ENCODE measurements at regions of chr6 and their contacts with region 1.

Region 1: DNA sequence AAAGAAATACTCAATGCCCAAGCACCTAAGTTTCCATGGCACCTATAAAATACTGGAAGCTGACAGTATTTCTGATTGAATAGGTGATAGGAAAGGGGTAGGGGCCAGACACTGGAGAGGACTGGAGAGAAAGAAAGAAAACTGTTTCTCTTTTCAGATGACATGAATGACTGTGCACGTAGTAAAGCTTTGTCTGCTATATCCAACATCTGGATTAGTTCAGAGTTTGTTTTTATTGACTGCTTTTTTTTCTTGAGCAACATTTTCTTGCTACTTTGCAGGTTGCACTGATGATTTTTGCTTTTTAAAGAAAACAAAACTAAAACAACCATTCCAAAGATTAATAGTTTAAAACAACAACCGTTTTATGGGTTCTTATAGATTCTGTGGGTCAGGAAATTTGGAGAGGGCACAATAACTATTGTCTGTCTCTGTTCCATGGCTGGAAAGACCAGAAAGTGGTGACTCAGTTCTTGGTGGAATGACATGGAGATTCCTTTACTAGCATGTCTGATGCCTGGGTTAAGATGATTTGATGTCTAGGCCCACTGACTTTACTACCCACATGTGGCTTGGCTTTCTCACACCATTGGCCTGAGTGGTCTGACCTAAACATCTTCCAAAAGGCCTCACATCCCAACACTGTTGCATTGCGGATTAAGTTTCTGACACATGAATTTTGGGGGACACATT is 12.2 kb upstream of the LRP11 start:
- DNase-seq: no peak
- H3K4me3 ChIP-seq: no peak overlapping the region
- H3K27ac ChIP-seq: no peak overlapping the region
- H3K4me1 ChIP-seq: no peaks in the 10 kb centered on the region
- H3K27me3 ChIP-seq: no peaks in the 10 kb centered on the region
- CTCF ChIP-seq: no peak
- EP300 ChIP-seq: no peak
- POLR2A ChIP-seq: no peak

Region 2: DNA sequence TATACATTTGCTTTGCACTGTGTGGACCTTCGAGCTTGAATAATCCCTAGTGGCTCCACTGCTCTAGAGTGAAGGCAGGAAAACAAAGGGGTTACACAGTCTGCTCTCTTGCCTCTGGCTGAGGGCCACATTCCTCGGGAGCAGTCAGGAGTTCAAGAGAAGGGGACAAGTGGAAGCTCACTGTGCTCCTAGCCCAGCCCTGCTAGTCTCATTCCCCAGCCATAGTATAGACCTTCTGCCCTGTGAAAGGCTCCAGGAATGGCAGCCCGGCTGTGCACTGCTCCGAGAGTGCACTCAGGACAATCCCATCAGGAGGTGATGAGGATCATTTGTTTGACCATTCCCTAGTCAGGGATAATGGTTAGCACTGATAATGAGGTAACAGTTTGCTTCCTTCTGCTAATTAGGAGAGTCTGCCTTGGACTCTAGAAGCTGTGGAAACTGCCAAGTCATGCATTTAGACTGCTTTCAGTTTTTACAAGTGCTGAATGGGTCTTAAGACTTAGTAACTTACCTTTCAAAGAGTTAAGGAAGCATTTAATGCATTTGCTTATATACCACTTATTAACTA is 500.9 kb after region 1 on chr6:
- in situ Hi-C with region 1: no loop called
- intact Hi-C with region 1: loop called (anchors 5 kb)
- DNase-seq: no peak
- H3K4me3 ChIP-seq: no peak overlapping the region
- H3K27ac ChIP-seq: no peak overlapping the region
- H3K4me1 ChIP-seq: no peaks in the 10 kb centered on the region
- H3K27me3 ChIP-seq: no peaks in the 10 kb centered on the region
- CTCF ChIP-seq: no peak
- EP300 ChIP-seq: no peak
- POLR2A ChIP-seq: no peak

Measured in transverse colon (tissue), 4 donors.